GM10248 (cell line): ENCODE measurements at regions of chr2 and their contacts with region 1.

Region 1: GRCh38 chr2:205947621-205948495 is 138.1 kb downstream of the INO80D start:
- DNase-seq: peak; percentile 78
- CTCF ChIP-seq: peak; percentile 97

Region 2: DNA sequence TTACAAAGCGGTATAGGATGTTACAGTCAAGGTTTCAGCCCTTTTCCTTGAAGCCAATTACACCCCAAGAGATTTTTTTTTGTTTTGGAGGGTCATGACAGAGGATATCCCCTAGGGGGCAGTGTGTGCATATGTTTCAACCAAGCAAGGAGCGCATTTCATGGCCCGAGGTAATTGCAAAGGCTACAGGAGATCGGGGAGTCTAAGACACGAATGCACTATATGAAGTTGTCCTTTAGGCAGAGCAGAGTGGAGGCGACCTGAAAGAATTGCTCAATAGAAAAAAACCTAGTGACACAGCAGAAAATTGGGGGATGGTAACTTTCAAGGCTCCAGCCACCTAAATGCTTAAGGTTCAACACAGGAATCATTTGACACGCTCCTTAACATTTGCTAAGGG is 1622.4 kb before region 1 on chr2:
- CTCF ChIA-PET with region 1: interaction called, 13 read pairs
- POLR2A ChIA-PET with region 1: no interaction called
- DNase-seq: peak; percentile 47
- CTCF ChIP-seq: peak; percentile 69

Region 3: GRCh38 chr2:205776139-205776538 is 171.7 kb before region 1 on chr2:
- CTCF ChIA-PET with region 1: interaction called, 11 read pairs
- POLR2A ChIA-PET with region 1: no interaction called
- DNase-seq: peak; percentile 57
- CTCF ChIP-seq: peak; percentile 69

Region 4: GRCh38 chr2:205925373-205926337 is 22.2 kb before region 1 on chr2:
- CTCF ChIA-PET with region 1: interaction called, 61 read pairs
- POLR2A ChIA-PET with region 1: no interaction called
- DNase-seq: peak; percentile 80
- CTCF ChIP-seq: peak; percentile 87

Region 5: DNA sequence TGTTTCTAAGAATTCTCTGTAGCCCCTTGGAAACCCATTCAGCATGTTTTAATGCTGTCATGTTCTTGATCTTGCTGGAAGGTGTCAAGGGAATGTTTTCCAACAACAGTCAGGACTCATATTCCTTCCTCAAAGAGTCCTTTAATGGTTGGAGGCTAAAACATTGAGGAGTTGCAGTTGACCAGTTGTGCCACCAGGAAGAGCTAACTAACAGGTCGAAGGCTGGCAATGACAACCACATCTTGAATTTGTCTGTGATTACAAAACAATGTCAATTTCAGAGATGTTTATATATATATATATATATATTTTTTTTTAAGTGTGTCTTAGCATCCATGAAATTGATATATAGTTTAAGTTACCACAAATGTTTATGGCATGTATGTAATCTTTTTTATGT is 13.4 kb before region 1 on chr2:
- CTCF ChIA-PET with region 1: interaction called, 61 read pairs
- POLR2A ChIA-PET with region 1: no interaction called
- DNase-seq: no peak
- CTCF ChIP-seq: no peak

Region 6: GRCh38 chr2:205972113-205972512 is 24.3 kb after region 1 on chr2:
- CTCF ChIA-PET with region 1: interaction called, 10 read pairs
- POLR2A ChIA-PET with region 1: no interaction called
- DNase-seq: no peak
- CTCF ChIP-seq: no peak

Region 7: DNA sequence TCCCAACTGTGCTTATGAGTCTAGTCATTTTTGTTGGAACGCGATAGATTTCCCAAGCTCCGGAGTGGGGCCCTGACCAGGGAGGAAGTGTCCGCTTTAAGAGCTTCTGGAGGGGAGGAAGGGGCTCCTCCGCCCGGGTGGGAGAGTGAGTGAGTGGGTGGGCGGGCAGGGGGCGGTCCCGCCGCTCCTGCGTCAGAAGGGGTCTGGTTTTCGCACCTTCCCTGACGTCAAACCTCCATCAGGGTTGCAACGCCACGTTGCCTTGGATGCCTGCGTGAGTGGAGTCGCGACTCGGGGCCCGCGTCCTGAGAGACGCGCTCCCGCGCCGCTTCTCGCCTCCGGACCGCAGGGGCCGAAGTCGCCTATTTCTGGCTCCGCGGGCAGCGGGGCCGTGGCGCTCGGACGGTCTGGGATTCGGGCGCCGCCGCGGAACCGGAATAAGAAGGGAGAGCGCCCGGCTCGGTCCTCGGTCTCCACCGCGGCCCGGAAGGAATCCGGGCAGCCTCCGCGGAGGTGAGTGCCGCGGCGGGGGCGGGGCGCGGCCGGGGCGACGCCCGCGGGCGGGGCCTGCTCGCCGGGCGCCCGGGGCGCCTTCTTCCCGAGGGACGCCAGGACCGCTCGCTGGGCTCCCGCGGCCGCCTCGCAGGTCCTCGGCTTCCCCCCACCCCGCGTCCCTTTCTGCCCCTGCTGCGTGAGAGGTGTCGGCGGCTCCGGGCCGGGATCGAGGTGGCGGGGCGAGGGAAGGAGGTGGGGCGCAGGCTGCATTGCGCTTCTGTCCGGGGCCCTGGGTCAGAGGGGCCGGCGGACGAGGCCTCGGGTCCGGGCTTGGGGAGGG is 326.8 kb after region 1 on chr2 and contains the start of gene ZDBF2:
- CTCF ChIA-PET with region 1: no interaction called
- POLR2A ChIA-PET with region 1: no interaction called
- DNase-seq: peak; percentile 82
- CTCF ChIP-seq: no peak